ENCODE measurements at regions of chr22 and their contacts with region 1.

Region 1: GRCh38 chr22:28855355-28856094 is 27.8 kb upstream of the ZNRF3 start:
- DNase-seq: no peak

Region 2: DNA sequence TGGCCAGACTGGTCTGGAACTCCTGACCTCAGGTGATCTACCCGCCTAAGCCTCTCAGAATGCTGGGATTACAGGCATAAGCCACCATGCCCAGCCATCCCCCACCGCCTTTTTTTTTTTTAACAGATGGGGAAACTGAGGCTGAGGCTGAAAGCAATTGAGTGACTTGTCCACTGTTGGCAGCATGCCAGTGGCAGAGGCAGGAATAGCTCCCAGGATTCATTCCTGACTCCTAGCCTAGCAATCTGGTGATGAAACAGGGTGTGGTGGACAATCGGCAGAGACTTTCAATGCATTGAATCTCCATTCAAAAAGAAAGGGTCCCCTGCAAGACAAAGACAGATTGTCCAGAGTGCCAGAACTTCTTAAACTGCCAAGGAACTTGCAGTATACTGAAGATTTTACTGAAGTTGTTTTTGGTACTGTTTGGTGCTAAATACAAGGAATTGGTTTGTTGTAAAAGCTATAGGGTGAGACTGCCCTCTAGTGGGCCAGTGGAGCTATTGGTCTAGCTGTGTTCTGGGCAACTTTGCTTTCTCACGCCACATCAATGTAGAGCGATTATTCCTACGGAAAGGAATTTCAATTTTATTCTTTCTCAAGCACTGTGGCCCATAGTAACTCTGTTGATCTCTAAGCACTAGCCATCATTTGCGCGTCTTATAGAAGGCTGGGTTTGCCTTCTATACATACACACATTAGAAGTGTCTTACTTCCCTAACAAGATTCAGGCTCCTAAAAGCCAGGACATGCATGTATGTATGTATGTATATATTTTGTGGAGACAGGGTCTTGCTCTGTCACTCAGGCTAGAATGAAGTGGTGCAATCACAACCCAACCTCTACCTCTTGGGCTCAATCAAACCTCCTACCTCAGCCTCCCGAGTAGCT is 185.1 kb after region 1 on chr22:
- intact Hi-C with region 1: loop called (anchors 2 kb)
- DNase-seq: no peak

Region 3: GRCh38 chr22:29154364-29155048 is 299.0 kb after region 1 on chr22:
- intact Hi-C with region 1: loop called (anchors 5 to 10 kb)
- DNase-seq: peak; percentile 95

Region 4: DNA sequence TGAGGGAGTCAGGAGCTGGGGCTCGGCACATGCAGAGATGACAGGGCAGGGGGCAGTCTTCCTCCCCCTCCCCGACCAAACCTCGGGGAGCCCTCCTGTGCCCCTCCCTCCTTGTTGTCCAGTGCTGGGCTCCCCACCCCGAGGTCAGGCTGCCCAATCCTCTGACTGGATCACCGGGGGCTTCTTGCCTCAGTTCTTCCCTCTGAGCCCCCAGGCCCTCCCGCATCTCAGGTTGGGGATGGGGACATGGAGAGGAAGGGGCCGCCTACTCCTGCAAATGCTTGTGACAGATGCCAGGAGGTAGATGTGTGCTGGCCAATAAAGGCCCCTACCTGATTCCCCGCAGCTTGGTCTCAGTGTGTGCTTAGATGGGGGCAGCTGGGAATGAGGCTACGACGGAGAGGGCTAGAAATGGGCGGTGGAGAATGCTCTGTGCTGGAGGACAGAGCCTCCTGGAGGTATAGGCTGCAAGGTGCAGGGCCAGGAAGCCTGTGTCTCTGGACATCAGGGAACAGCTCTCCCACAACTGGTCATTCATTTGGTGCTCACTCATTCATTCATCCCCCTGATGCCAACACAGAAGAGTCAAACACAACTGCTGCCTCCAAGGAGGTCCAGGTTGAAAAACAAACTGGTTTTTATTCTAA is 403.9 kb after region 1 on chr22:
- intact Hi-C with region 1: loop called in 1 of 2 experiments (anchors 10 kb)
- DNase-seq: no peak

Region 5: GRCh38 chr22:29701155-29701999 is 845.9 kb after region 1 on chr22:
- intact Hi-C with region 1: loop called in 1 of 2 experiments (anchors 10 kb)
- DNase-seq: no peak

Region 6: DNA sequence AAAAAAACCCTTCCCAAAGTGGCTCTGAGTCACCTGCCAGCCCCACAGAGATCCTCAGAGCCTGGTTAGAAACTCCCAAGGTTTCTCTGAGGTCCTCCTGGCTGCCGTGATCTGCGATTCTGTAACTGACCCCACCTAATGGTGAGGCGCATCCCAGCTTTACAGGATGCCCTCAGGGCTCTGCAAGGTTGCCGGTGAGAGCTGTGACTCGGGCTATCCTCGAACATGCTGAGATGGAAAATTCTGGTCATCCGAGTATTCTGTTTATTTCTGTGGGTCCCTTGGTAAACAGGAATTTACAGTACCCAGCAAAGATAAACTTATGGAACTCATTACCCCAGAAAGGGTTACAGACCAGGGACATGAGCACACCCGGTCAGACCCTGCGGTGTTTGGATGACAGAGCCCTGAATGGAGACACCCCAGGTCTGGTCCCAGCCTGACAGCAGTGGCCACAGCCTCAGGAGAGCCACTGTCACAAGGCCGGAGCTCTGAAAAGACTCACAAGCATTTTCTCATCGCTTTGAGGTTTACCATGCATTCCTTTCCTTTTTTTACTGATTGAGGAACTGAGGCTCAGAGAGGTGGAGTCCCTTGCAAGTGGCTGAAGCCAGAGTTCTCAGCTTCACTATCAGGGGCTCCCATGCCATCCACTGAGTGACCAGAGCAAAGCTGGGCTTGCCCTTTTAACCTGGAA is 1368.8 kb after region 1 on chr22:
- intact Hi-C with region 1: no loop called
- DNase-seq: no peak